ENCODE measurements at regions of chr6 and their contacts with region 1.

Region 1: DNA sequence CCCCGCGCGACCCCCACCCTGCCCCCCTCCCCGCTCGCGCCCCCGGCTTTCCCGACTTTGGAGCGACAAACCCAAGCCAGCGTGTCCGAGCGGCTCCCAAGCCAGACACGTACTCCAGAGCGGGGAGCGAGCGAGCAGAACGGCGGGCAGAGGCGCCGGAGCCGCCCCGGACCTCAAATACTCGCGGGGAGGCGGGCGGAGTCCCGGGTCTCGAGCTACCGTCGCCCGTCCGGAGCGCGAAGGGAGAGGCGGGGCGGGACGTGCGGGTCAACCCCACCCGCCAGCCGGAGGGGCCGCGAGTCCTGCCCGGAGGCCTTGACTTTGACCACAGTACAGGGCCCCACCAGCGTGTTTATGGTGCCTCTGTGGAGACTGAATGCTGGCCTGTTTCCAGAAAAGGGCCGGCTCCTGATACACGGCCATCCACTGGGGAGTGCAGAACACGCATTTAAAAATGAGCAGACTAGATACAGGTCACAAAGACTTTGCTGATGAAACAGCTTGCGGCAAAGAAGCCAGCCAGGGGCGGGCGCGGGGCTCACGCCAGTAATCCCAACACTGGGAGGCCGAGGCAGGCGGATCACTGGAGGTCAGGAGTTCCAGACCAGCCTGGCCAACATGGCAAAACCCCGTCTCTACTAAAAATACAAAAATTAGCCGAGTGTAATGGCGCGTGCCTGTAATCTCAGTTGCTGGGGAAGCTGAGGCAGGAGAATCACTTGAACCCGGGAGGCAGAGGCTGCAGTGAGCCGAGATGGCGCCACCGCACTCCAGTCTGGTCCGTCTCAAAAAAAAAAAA is at the start of gene SERPINB6:
- DNase-seq: peak in 8 of 9 donors; percentile 31 to 57 (median 44)
- ATAC-seq: peak; percentile 70
- H3K4me3 ChIP-seq: peak within 1 kb of the TSS; percentile 66
- H3K4me3 Mint-ChIP-seq: peak within 1 kb of the TSS; percentile 83 to 94 (median 91)
- H3K27ac ChIP-seq: peak within 1 kb of the TSS; percentile 72
- H3K27ac Mint-ChIP-seq: peak within 1 kb of the TSS; percentile 77 to 95 (median 93)
- H3K4me1 ChIP-seq: peaks cover 7 to 19% of the 10 kb centered on the region in 2 donors
- H3K4me1 Mint-ChIP-seq: peaks cover 14 to 62% (median 48%) of the 10 kb centered on the region in 7 donors
- H3K27me3 ChIP-seq: no peaks in the 10 kb centered on the region
- H3K27me3 Mint-ChIP-seq: peaks cover 0 to 66% (median 0%) of the 10 kb centered on the region in 5 donors
- total RNA-seq, gene SERPINB6: 19.7 to 60.5 (median 56.4) TPM

Region 2: DNA sequence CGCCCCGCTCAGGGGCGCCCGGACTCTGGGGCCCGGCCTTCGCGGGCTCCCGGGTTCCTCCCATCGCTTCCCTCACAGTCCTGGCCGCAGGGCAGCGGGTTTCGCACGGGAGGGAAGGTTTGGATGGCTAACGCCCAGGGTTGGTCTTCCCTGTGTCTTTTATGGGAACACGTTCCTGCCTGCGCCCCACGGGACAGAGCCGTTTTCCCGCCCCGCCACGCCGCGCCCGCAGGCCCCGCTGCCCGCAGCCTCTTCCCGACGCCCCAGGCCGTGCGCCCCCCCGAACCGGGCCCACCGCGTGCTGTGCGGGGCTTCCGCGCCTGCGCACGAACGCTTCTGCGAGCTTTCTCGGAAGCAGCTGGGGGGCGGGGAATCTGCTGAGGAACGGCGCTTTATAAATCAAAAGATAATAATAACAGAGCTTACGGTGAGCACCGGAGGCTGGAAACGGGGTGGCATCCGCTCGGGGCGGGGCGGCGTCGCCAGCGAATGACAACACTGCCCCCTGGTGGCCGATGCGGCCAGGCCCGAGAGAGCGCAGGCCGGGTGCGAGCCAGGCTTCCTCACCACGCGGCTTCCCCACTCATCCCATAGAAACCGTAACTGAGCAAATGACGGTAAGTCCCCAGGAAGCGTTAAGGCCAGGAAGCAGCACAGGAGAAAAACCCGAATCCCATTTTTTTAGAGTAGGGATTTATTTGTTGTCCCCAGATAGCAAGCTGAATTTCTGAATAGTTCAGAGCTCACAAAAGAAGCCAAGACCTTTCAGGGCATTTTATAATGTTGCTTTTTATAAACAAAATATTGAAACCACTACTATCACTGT is 337.3 kb before region 1 on chr6:
- CTCF ChIA-PET with region 1: no interaction called
- POLR2A ChIA-PET with region 1: no interaction called
- intact Hi-C with region 1: no loop called
- DNase-seq: peak; percentile 65 to 88 (median 81)
- ATAC-seq: peak; percentile 97
- H3K4me3 ChIP-seq: peak overlapping the region; percentile 47
- H3K4me3 Mint-ChIP-seq: peak overlapping the region; percentile 65 to 85 (median 78)
- H3K27ac ChIP-seq: no peak overlapping the region
- H3K27ac Mint-ChIP-seq: peak overlapping the region in 4 of 9 donors; percentile 32 to 51 (median 46)
- H3K4me1 ChIP-seq: no peaks in the 10 kb centered on the region
- H3K4me1 Mint-ChIP-seq: peaks cover 0 to 7% (median 0%) of the 10 kb centered on the region in 7 donors
- H3K27me3 ChIP-seq: no peaks in the 10 kb centered on the region
- H3K27me3 Mint-ChIP-seq: peaks cover 14 to 37% (median 21%) of the 10 kb centered on the region in 5 donors

Region 3: GRCh38 chr6:2952557-2953095 is 19.0 kb before region 1 on chr6:
- CTCF ChIA-PET with region 1: interaction called, 3 read pairs
- POLR2A ChIA-PET with region 1: interaction called, 3 read pairs
- intact Hi-C with region 1: loop called (anchors 2 kb)
- DNase-seq: peak in 4 of 9 donors; percentile 10 to 61 (median 54)
- ATAC-seq: peak; percentile 96
- H3K4me3 ChIP-seq: no peak overlapping the region
- H3K4me3 Mint-ChIP-seq: peak overlapping the region in 3 of 10 donors; percentile 53 to 65 (median 64)
- H3K27ac ChIP-seq: no peak overlapping the region
- H3K27ac Mint-ChIP-seq: peak overlapping the region in 4 of 9 donors; percentile 34 to 87 (median 68)
- H3K4me1 ChIP-seq: peaks cover 0 to 2% of the 10 kb centered on the region in 2 donors
- H3K4me1 Mint-ChIP-seq: peaks cover 10 to 31% (median 16%) of the 10 kb centered on the region in 7 donors
- H3K27me3 ChIP-seq: no peaks in the 10 kb centered on the region
- H3K27me3 Mint-ChIP-seq: peaks cover 0 to 12% (median 0%) of the 10 kb centered on the region in 5 donors

Region 4: GRCh38 chr6:2959909-2960719 is 11.5 kb before region 1 on chr6:
- CTCF ChIA-PET with region 1: no interaction called
- POLR2A ChIA-PET with region 1: interaction called, 16 read pairs
- intact Hi-C with region 1: loop called (anchors 2 kb)
- DNase-seq: no peak
- ATAC-seq: no peak
- H3K4me3 ChIP-seq: no peak overlapping the region
- H3K4me3 Mint-ChIP-seq: no peak overlapping the region
- H3K27ac ChIP-seq: no peak overlapping the region
- H3K27ac Mint-ChIP-seq: peak overlapping the region in 6 of 9 donors; percentile 14 to 85 (median 45)
- H3K4me1 ChIP-seq: peaks cover 0 to 14% of the 10 kb centered on the region in 2 donors
- H3K4me1 Mint-ChIP-seq: peaks cover 3 to 68% (median 43%) of the 10 kb centered on the region in 7 donors
- H3K27me3 ChIP-seq: no peaks in the 10 kb centered on the region
- H3K27me3 Mint-ChIP-seq: peaks cover 0 to 7% (median 0%) of the 10 kb centered on the region in 5 donors

Measured in naive thymus-derived CD4-positive, alpha-beta T cell (primary cell).